Mammary epithelial cell (primary cell): ENCODE measurements at regions of chr19 and their contacts with region 1.

Region 1: DNA sequence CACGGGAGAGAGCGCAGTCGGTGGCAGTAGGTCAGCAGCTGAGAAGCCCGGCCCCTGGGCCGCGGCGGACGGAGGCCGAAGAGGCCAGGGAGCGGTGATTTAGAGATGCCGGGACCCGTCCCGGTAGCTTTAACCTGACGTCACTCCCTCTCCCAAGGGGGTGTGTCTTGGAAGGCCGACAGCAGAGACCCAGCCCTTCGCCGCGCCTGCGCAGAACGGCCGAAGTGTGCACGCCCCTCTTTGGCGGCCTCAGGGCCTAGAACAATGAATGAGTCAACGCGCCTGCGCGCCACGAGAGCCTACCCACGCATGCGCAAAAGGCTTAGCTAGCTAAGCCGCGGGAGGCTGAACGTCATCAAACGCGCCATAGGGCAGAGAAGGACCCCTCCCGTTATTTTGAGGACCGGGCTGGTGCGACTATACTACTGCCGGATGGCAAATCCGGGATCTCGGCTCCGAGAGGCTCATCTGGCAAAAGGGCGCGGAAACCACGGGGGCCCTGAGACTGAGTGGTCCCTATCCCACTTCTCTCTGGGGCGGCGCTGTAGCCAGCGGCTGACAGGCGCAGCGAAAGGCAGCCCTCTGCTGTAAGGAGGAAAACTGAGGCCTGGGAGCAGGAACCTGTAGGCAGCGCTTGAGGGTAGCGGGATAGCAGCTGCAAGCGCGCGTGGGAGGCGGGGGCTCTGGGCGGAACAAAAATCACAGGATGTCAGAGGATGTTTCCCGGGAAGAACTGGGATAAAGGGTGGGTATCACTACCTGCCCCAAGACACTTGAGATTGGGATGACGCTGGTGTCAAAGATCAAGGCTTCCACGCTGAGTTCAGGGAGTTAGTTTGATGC is at the starts of genes IRGQ and ZNF576:
- DNase-seq: peak; percentile 99
- H3K4me3 ChIP-seq: peak within 1 kb of the TSS; percentile 58 to 76 (median 67)
- H3K27ac ChIP-seq: peak within 1 kb of the TSS; percentile 94
- H3K4me1 ChIP-seq: peaks cover 23% of the 10 kb centered on the region
- H3K27me3 ChIP-seq: no peaks in the 10 kb centered on the region
- CTCF ChIP-seq: no peak
- total RNA-seq, gene IRGQ: 23.5 to 31.2 TPM
- total RNA-seq, gene ZNF576: 10.3 to 15.5 TPM

Region 2: GRCh38 chr19:43433358-43433673 is 162.9 kb before region 1 on chr19:
- CTCF ChIA-PET with region 1: no interaction called
- dilution Hi-C with region 1: no loop called
- in situ Hi-C with region 1: no loop called
- intact Hi-C with region 1: loop called (anchors 2 kb)
- DNase-seq: no peak
- H3K4me3 ChIP-seq: no peak overlapping the region
- H3K27ac ChIP-seq: no peak overlapping the region
- H3K4me1 ChIP-seq: peaks cover 2% of the 10 kb centered on the region
- H3K27me3 ChIP-seq: no peaks in the 10 kb centered on the region
- CTCF ChIP-seq: no peak

Region 3: GRCh38 chr19:43532962-43533545 is 63.2 kb before region 1 on chr19 and contains the start of gene ZNF575:
- CTCF ChIA-PET with region 1: no interaction called
- dilution Hi-C with region 1: loop called (anchors 5 kb)
- in situ Hi-C with region 1: no loop called
- intact Hi-C with region 1: loop called (anchors 1 kb)
- DNase-seq: peak; percentile 92
- H3K4me3 ChIP-seq: peak within 1 kb of the TSS; percentile 47 to 74 (median 48)
- H3K27ac ChIP-seq: peak within 1 kb of the TSS; percentile 19
- H3K4me1 ChIP-seq: peaks cover 26% of the 10 kb centered on the region
- H3K27me3 ChIP-seq: no peaks in the 10 kb centered on the region
- CTCF ChIP-seq: no peak
- total RNA-seq, gene ZNF575: 0.17 to 2.1 TPM

Region 4: GRCh38 chr19:43575156-43575950 is 20.9 kb before region 1 on chr19 and contains the starts of genes PINLYP and XRCC1:
- CTCF ChIA-PET with region 1: no interaction called
- dilution Hi-C with region 1: no loop called
- in situ Hi-C with region 1: no loop called
- intact Hi-C with region 1: loop called (anchors 1 kb)
- DNase-seq: peak; percentile 98
- H3K4me3 ChIP-seq: peak within 1 kb of the TSS; percentile 81 to 93 (median 89)
- H3K27ac ChIP-seq: peak within 1 kb of the TSS; percentile 97
- H3K4me1 ChIP-seq: peaks cover 16% of the 10 kb centered on the region
- H3K27me3 ChIP-seq: no peaks in the 10 kb centered on the region
- CTCF ChIP-seq: no peak
- total RNA-seq, gene PINLYP: 0.21 to 0.83 TPM
- total RNA-seq, gene XRCC1: 11.0 to 25.3 TPM

Region 5: GRCh38 chr19:43639519-43640423 is 43.6 kb after region 1 on chr19 and contains the start of gene CADM4:
- CTCF ChIA-PET with region 1: no interaction called
- dilution Hi-C with region 1: loop called (anchors 5 kb)
- in situ Hi-C with region 1: no loop called
- intact Hi-C with region 1: loop called (anchors 5 kb)
- DNase-seq: no peak
- H3K4me3 ChIP-seq: peak within 1 kb of the TSS; percentile 44 to 72 (median 54)
- H3K27ac ChIP-seq: no peak within 1 kb of the TSS
- H3K4me1 ChIP-seq: peaks cover 24% of the 10 kb centered on the region
- H3K27me3 ChIP-seq: no peaks in the 10 kb centered on the region
- CTCF ChIP-seq: no peak
- total RNA-seq, gene CADM4: 11.7 to 12.8 TPM

Region 6: GRCh38 chr19:43784981-43785808 is 189.0 kb after region 1 on chr19:
- CTCF ChIA-PET with region 1: interaction called, 3 read pairs
- dilution Hi-C with region 1: no loop called
- in situ Hi-C with region 1: no loop called
- intact Hi-C with region 1: loop called (anchors 2 kb)
- DNase-seq: peak; percentile 67
- H3K4me3 ChIP-seq: no peak overlapping the region
- H3K27ac ChIP-seq: peak overlapping the region; percentile 88
- H3K4me1 ChIP-seq: peaks cover 51% of the 10 kb centered on the region
- H3K27me3 ChIP-seq: no peaks in the 10 kb centered on the region
- CTCF ChIP-seq: peak; percentile 99 to 100